ENCODE measurements at regions of chr1 and their contacts with region 1.

Region 1: GRCh38 chr1:163985700-163986099 is 573.3 kb upstream of the PBX1 start:
- DNase-seq: no peak
- H3K4me3 ChIP-seq: no peak overlapping the region
- H3K27ac ChIP-seq: no peak overlapping the region
- H3K4me1 ChIP-seq: peaks cover 0 to 22% (median 3%) of the 10 kb centered on the region in 4 donors
- H3K27me3 ChIP-seq: no peaks in the 10 kb centered on the region
- CTCF ChIP-seq: no peak
- EP300 ChIP-seq: peak in 3 of 4 donors; percentile 16 to 66 (median 48)
- POLR2A ChIP-seq: no peak

Region 2: DNA sequence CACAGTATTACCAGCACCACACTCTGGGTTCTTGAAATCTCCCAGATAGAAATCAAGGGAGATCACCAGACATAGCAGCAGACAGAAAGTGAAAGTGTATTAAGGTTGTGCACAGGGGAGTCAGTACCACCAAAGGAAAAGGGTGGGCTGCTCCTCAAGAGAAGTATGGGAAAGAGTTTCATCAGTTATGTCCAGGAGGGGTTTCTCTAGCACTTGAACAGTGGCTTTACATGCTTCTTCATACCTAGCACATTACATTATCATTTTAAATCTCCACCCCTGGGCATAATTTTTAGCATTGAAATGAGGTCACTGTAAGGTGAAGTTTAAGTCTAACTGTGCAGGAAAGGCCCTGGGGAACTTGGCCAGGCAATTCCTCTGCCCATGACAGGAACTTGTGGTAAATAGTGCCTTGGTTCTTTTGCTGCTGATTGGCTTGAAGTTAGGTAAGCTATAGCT is 62.9 kb before region 1 on chr1:
- intact Hi-C with region 1: no loop called
- DNase-seq: no peak
- H3K4me3 ChIP-seq: peak overlapping the region in 1 of 4 donors; percentile 5
- H3K27ac ChIP-seq: peak overlapping the region in 1 of 4 donors; percentile 19
- H3K4me1 ChIP-seq: peaks cover 0 to 7% (median 0%) of the 10 kb centered on the region in 4 donors
- H3K27me3 ChIP-seq: no peaks in the 10 kb centered on the region
- CTCF ChIP-seq: no peak
- EP300 ChIP-seq: no peak
- POLR2A ChIP-seq: no peak

Region 3: DNA sequence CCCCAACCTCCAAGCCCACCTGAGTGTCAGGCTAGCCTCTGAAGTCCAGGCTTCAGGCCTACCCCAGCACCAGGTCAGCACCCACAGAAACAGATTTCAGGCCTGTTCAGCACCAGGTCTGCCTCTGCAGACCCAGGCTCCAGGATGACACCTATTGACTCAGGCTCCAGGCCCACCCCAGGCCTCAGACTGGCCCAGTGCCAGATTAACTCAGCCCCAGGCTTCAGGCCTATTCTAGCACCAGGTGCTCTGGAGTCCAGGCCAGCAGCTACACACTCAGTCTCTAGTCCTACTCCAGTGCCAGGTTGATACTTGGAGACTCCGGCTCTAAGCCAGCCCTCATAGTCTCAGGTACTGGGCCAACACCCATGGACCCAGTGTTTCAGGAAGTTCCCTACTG is 31.5 kb after region 1 on chr1:
- intact Hi-C with region 1: no loop called
- DNase-seq: no peak
- H3K4me3 ChIP-seq: no peak overlapping the region
- H3K27ac ChIP-seq: no peak overlapping the region
- H3K4me1 ChIP-seq: no peaks in the 10 kb centered on the region
- H3K27me3 ChIP-seq: no peaks in the 10 kb centered on the region
- CTCF ChIP-seq: no peak
- EP300 ChIP-seq: no peak
- POLR2A ChIP-seq: no peak

Region 4: GRCh38 chr1:164296172-164296571 is 310.5 kb after region 1 on chr1:
- intact Hi-C with region 1: loop called (anchors 5 kb)
- DNase-seq: peak; percentile 91
- H3K4me3 ChIP-seq: peak overlapping the region in 3 of 4 donors; percentile 19 to 36 (median 30)
- H3K27ac ChIP-seq: peak overlapping the region; percentile 62 to 82 (median 81)
- H3K4me1 ChIP-seq: peaks cover 0 to 16% (median 13%) of the 10 kb centered on the region in 4 donors
- H3K27me3 ChIP-seq: no peaks in the 10 kb centered on the region
- CTCF ChIP-seq: no peak
- EP300 ChIP-seq: peak; percentile 23 to 62 (median 44)
- POLR2A ChIP-seq: no peak